Right ventricle myocardium inferior (tissue), 1 donor: ENCODE measurements at regions of chrX and their contacts with region 1.

Region 1: GRCh38 chrX:1486749-1487361 is 34.1 kb upstream of the ASMTL start:
- DNase-seq: no peak
- ATAC-seq: peak; percentile 72

Region 2: DNA sequence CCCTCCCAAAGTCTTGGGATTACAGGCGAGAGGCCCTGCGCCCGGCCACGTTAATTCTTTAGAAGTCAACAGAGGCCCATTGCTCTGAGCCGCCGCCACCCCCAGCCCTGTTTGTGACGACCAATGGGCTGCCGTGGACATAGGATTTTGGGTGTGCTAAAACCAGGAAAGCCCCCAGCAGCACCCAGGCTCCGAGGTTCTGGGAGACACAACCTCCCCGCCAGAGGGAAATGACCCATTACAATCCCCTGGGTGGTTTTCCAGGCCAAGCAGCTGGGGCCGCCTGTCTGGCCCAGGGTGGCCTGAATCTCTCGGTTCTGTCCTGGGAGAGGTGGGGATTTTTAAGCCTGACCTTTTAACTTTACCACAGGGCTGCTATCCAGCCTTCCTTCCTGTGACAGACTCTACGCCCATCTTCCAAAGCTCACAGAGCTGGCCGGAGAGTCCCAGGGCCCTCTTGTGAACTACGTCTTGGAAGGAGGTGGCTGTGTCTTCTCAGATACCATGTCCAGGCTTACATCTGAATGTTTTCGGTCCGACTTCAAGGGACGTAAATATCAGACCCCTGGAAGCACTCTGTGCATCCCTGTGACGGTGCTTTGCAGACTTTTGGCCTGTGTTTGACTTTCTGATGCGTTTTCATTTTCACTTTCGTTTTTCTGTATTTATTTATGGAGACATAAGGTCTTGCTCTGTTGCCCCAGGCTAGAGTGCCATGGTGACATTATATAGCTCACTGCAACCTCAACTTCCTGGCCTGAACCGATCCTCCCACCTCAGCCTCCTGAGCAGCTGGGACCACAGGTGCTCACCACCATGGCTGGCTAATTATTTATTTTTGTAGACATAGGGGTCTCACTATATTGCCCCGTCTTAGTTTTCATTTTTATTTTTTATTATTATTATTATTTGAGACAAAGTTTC is 14.1 kb after region 1 on chrX:
- intact Hi-C with region 1: no loop called
- DNase-seq: no peak
- ATAC-seq: no peak

Region 3: GRCh38 chrX:1537035-1537715 is 50.3 kb after region 1 on chrX and contains the start of gene P2RY8:
- intact Hi-C with region 1: loop called (anchors 5 kb)
- DNase-seq: peak; percentile 86
- ATAC-seq: peak; percentile 47
- total RNA-seq, gene P2RY8: 1.9 TPM

Region 4: GRCh38 chrX:1788300-1788911 is 301.6 kb after region 1 on chrX:
- intact Hi-C with region 1: no loop called
- DNase-seq: no peak
- ATAC-seq: no peak